Heart left ventricle (tissue), 16 donors: ENCODE measurements at regions of chr11 and their contacts with region 1.

Region 1: GRCh38 chr11:88543902-88544655 is 206.5 kb upstream of the CTSC start:
- DNase-seq: peak; percentile 70 to 81 (median 73)
- ATAC-seq: peak; percentile 95 to 100 (median 98)
- H3K4me3 ChIP-seq: no peak overlapping the region
- H3K27ac ChIP-seq: no peak overlapping the region
- H3K4me1 ChIP-seq: peaks cover 0 to 3% (median 0%) of the 10 kb centered on the region in 12 donors
- H3K27me3 ChIP-seq: no peaks in the 10 kb centered on the region
- CTCF ChIP-seq: peak; percentile 68 to 95 (median 87)
- POLR2A ChIP-seq: no peak

Region 2: GRCh38 chr11:87352759-87353707 is 1191.0 kb before region 1 on chr11:
- intact Hi-C with region 1: loop called in 7 of 10 experiments (anchors 5 to 10 kb)
- DNase-seq: peak; percentile 80 to 92 (median 85)
- ATAC-seq: peak; percentile 86 to 96 (median 94)
- H3K4me3 ChIP-seq: no peak overlapping the region
- H3K27ac ChIP-seq: peak overlapping the region in 4 of 12 donors; percentile 3 to 62 (median 16)
- H3K4me1 ChIP-seq: peaks cover 0 to 50% (median 18%) of the 10 kb centered on the region in 12 donors
- H3K27me3 ChIP-seq: no peaks in the 10 kb centered on the region
- CTCF ChIP-seq: peak; percentile 96 to 100 (median 99)
- POLR2A ChIP-seq: no peak

Region 3: GRCh38 chr11:87421422-87421821 is 1122.7 kb before region 1 on chr11:
- intact Hi-C with region 1: loop called in 1 of 10 experiments (anchors 10 kb)
- DNase-seq: peak in 3 of 5 donors; percentile 22 to 42 (median 32)
- ATAC-seq: peak; percentile 56 to 91 (median 86)
- H3K4me3 ChIP-seq: no peak overlapping the region
- H3K27ac ChIP-seq: no peak overlapping the region
- H3K4me1 ChIP-seq: peaks cover 0 to 22% (median 9%) of the 10 kb centered on the region in 12 donors
- H3K27me3 ChIP-seq: no peaks in the 10 kb centered on the region
- CTCF ChIP-seq: peak; percentile 73 to 90 (median 85)
- POLR2A ChIP-seq: no peak

Region 4: DNA sequence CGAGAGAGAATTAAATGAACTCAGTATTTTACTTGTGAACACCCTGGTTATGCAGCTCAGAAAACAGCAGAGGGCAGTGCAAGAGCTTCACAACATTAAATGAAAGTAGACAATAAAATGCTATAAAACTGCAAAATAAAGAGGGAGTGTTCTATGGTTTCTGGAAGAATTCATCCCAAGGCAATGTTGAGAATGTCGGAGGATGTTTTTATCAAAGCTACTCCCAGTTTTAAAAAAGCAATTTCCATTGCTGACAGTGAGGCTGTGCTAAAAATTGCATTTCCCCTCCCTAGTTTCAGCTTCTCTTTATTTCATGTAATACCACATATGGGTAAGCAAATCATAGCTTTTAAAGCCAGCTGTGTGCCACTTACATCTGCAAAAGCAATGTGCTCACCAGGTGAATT is 665.7 kb before region 1 on chr11:
- intact Hi-C with region 1: loop called in 1 of 10 experiments (anchors 5 kb)
- DNase-seq: no peak
- ATAC-seq: no peak
- H3K4me3 ChIP-seq: no peak overlapping the region
- H3K27ac ChIP-seq: no peak overlapping the region
- H3K4me1 ChIP-seq: no peaks in the 10 kb centered on the region
- H3K27me3 ChIP-seq: no peaks in the 10 kb centered on the region
- CTCF ChIP-seq: peak in 6 of 12 donors; percentile 14 to 44 (median 35)
- POLR2A ChIP-seq: no peak

Region 5: DNA sequence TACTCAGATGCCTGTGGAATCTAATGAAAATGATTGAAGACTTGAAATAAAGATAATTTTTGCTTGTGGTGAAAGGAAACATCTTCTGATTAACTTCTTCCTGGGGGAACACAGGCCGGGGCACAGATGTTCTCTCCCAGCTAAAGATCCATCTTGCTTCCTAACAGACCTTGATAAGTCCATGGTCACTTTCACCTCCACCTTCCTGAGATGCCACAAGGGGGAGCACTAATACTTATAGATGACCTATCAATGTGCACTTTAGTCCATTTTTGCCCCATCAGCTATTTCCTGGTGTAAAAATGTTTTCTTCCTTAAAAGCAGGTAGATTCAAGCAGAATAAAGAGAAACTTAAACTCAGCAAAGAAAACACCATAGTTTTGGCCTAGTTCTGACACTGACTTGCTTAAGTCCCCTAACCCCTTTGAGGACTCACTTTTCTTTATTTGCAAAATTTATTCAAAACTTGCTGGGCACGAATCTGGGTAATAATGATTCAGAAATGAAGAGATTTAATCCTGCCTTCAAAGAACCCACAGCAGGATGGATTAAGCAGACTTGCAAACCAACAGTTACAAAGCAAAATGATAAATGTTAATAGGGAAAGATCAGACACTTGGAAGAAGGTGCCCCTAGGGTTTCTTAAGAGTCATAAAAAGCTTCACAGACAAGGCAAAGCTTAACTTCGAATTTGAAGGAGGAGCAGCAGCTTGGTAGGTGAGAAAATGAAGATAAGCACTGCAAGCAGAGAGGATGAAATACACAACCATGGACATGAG is 527.5 kb before region 1 on chr11:
- intact Hi-C with region 1: loop called in 3 of 10 experiments (anchors 1 kb)
- DNase-seq: peak in 4 of 5 donors; percentile 37 to 49 (median 42)
- ATAC-seq: peak in 2 of 4 donors; percentile 70 to 71
- H3K4me3 ChIP-seq: no peak overlapping the region
- H3K27ac ChIP-seq: no peak overlapping the region
- H3K4me1 ChIP-seq: no peaks in the 10 kb centered on the region
- H3K27me3 ChIP-seq: peaks cover 0 to 5% (median 0%) of the 10 kb centered on the region in 9 donors
- CTCF ChIP-seq: peak; percentile 47 to 78 (median 62)
- POLR2A ChIP-seq: no peak

Region 6: GRCh38 chr11:88231894-88232482 is 312.1 kb before region 1 on chr11:
- intact Hi-C with region 1: loop called in 7 of 10 experiments (anchors 2 to 10 kb)
- DNase-seq: no peak
- ATAC-seq: peak in 1 of 4 donors; percentile 55
- H3K4me3 ChIP-seq: no peak overlapping the region
- H3K27ac ChIP-seq: no peak overlapping the region
- H3K4me1 ChIP-seq: no peaks in the 10 kb centered on the region
- H3K27me3 ChIP-seq: no peaks in the 10 kb centered on the region
- CTCF ChIP-seq: peak in 11 of 12 donors; percentile 28 to 59 (median 48)
- POLR2A ChIP-seq: no peak

Region 7: GRCh38 chr11:88367310-88367709 is 176.8 kb before region 1 on chr11:
- intact Hi-C with region 1: no loop called
- DNase-seq: no peak
- ATAC-seq: no peak
- H3K4me3 ChIP-seq: no peak overlapping the region
- H3K27ac ChIP-seq: no peak overlapping the region
- H3K4me1 ChIP-seq: peaks cover 0 to 11% (median 0%) of the 10 kb centered on the region in 12 donors
- H3K27me3 ChIP-seq: no peaks in the 10 kb centered on the region
- CTCF ChIP-seq: no peak
- POLR2A ChIP-seq: no peak